ENCODE measurements at regions of chr15 and their contacts with region 1.

Region 1: DNA sequence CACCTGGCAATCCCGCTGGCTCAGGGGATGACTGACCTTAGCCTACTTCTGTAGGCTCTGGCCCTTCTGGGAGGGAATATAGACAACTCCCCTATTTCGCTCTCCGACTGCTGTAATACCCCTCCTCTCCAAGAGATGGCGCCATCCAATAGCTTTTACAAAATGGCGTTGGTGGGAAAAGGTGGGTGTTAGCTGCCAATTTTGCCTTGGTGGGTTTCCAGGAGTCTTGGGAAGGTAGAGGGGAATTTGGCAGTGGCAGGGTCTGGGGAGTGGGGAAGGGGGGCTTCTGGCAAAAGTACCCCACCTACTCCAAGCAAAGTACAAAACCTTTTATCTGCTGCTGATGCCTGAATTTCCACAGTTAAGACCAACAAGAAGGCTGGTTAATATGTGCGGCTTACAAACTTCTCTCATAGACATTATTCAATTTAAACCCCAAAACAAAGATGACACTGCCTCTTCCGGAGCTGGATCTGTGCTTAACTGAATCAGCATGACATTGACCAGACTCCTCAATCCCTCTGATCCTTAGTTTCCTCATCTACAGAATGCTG is 62.1 kb downstream of the RASGRF1 start:
- DNase-seq: no peak
- ATAC-seq: peak; percentile 76
- H3K4me3 ChIP-seq: no peak overlapping the region
- H3K27ac ChIP-seq: no peak overlapping the region
- H3K4me1 ChIP-seq: no peaks in the 10 kb centered on the region
- H3K27me3 ChIP-seq: no peaks in the 10 kb centered on the region
- CTCF ChIP-seq: peak; percentile 89 to 97 (median 90)
- EP300 ChIP-seq: no peak
- POLR2A ChIP-seq: no peak
- RAD21 ChIP-seq: peak; percentile 95

Region 2: DNA sequence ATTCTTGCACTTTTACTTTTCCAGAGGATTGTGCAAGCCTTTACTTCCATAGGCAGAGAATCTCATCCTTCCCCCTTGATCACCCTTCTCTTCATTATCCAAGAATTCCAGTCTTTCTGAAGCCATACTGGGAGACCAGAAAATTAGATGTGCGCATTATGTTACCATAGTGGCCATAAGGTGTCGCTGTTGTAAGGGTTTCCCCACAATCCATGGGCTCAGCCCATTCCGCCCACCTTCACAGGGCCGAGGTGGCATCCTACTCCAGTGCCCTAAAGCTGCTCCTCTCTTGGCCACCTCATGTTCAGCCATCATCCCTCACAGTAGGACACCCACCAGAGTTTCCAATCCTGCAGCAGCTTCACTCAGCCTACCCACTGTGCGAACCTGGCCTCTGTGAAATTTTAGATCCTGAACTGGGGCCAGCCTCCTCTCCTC is 118.7 kb before region 1 on chr15:
- CTCF ChIA-PET with region 1: interaction called, 81 read pairs
- POLR2A ChIA-PET with region 1: interaction called, 4 read pairs
- RAD21 ChIA-PET with region 1: interaction called, 19 read pairs
- SMC1A ChIA-PET with region 1: interaction called, 19 read pairs
- in situ Hi-C with region 1: no loop called
- intact Hi-C with region 1: loop called (anchors 5 kb)
- DNase-seq: peak; percentile 26
- ATAC-seq: peak; percentile 87
- H3K4me3 ChIP-seq: no peak overlapping the region
- H3K27ac ChIP-seq: no peak overlapping the region
- H3K4me1 ChIP-seq: peaks cover 10% of the 10 kb centered on the region; the same call in 1 of the 2 replicates
- H3K27me3 ChIP-seq: no peaks in the 10 kb centered on the region
- CTCF ChIP-seq: peak; percentile 60 to 70 (median 69); a peak in 5 of 6 replicates
- EP300 ChIP-seq: no peak
- POLR2A ChIP-seq: peak; percentile 19; the same call in 1 of the 2 replicates
- RAD21 ChIP-seq: peak; percentile 79

Region 3: DNA sequence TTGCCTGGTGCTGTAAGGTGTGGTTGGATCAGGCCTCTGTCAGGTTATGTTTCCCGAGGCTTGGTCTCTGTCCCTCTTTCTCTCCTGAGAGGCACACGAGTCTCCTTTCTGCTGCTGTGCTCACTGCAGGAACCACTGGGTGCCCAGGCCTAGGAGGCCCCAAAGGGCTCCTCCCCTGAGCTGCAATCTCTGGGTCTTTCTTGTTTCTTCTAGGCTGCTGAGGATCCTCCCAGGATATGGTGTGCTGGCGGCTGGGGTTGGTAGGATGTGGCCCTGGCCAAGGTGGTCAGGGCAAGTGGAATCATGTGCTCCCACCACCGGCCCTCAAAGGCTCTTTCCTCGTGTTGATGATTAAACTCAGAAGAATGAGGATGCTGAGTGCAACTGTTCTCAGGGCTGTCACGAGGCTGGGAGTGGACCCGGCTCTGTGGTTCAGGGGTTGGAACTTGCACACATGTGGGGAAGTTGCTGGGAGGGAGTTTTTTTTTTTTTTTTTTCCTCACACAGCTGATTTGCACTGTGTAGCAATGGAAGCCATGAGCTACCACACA is 40.1 kb before region 1 on chr15:
- CTCF ChIA-PET with region 1: interaction called, 13 read pairs
- POLR2A ChIA-PET with region 1: interaction called, 3 read pairs
- RAD21 ChIA-PET with region 1: interaction called, 5 read pairs
- SMC1A ChIA-PET with region 1: interaction called, 6 read pairs
- in situ Hi-C with region 1: no loop called
- intact Hi-C with region 1: no loop called
- DNase-seq: peak; percentile 63
- ATAC-seq: peak; percentile 81
- H3K4me3 ChIP-seq: no peak overlapping the region
- H3K27ac ChIP-seq: peak overlapping the region; percentile 33; the same call in 1 of the 2 replicates
- H3K4me1 ChIP-seq: peaks cover 26% of the 10 kb centered on the region
- H3K27me3 ChIP-seq: no peaks in the 10 kb centered on the region
- CTCF ChIP-seq: no peak
- EP300 ChIP-seq: no peak; a peak in 1 of 4 replicates
- POLR2A ChIP-seq: no peak
- RAD21 ChIP-seq: no peak

Region 4: DNA sequence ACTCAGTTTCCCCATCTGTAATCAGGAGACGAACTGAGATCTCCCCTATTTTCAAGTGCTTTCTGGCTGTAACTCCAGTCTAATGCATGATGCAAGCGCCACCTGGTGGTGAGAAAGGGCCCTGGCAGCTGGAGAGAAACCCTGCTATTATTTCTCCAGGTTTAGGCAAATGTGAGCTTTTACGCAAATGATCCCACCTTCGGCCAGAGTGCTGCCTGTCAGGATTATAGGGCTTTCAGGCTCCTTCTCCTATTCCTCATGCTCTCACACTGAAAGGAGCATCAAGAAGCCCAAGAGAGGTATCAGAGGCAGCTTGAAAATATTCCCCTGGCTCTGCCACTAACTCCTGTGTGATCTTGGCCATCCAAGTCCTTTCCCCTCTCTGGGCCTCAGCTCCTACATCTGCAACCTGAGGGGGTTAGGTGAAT is 156.0 kb after region 1 on chr15:
- CTCF ChIA-PET with region 1: interaction called, 351 read pairs
- POLR2A ChIA-PET with region 1: interaction called, 4 read pairs
- RAD21 ChIA-PET with region 1: interaction called, 145 read pairs
- SMC1A ChIA-PET with region 1: interaction called, 147 read pairs
- in situ Hi-C with region 1: loop called (anchors 5 kb)
- intact Hi-C with region 1: loop called (anchors 1 kb)
- DNase-seq: peak; percentile 25
- ATAC-seq: peak; percentile 94
- H3K4me3 ChIP-seq: no peak overlapping the region
- H3K27ac ChIP-seq: no peak overlapping the region
- H3K4me1 ChIP-seq: no peaks in the 10 kb centered on the region
- H3K27me3 ChIP-seq: peaks cover 0 to 2% of the 10 kb centered on the region in 2 experiments; a peak in 1 of 4 replicates
- CTCF ChIP-seq: peak; percentile 94 to 97 (median 96)
- EP300 ChIP-seq: no peak
- POLR2A ChIP-seq: no peak
- RAD21 ChIP-seq: peak; percentile 97

Region 5: DNA sequence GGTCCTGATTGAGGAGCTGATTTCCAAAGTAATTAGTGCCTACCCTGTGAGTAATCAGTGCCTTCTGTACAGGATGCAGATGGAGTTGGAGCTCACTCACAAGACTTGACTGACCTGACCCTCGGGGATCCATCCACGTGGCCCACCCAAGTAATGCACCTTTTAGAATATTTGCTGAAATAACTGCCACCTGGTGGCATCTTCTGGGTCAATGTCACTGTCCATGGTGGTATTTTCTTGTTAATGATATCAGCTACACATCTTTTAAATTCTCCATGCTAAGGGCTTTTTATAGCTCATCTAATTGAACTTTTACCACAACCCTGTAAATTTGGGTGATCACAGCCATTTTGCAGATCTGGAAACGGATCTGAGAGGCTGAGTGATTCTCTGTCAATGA is 179.7 kb after region 1 on chr15:
- CTCF ChIA-PET with region 1: interaction called, 17 read pairs
- POLR2A ChIA-PET with region 1: no interaction called
- RAD21 ChIA-PET with region 1: no interaction called
- SMC1A ChIA-PET with region 1: interaction called, 9 read pairs
- in situ Hi-C with region 1: no loop called
- intact Hi-C with region 1: no loop called
- DNase-seq: no peak
- ATAC-seq: peak; percentile 46; the same call in 2 of the 3 replicates
- H3K4me3 ChIP-seq: no peak overlapping the region
- H3K27ac ChIP-seq: no peak overlapping the region
- H3K4me1 ChIP-seq: no peaks in the 10 kb centered on the region
- H3K27me3 ChIP-seq: peaks cover 7 to 8% of the 10 kb centered on the region in 2 experiments
- CTCF ChIP-seq: peak in 1 of 3 experiments; percentile 6; a peak in 1 of 6 replicates
- EP300 ChIP-seq: no peak
- POLR2A ChIP-seq: no peak
- RAD21 ChIP-seq: no peak

Measured in GM12878 (cell line).